Activated CD8-positive, alpha-beta T cell treated with anti-CD3 and anti-CD28 coated beads, Interleukin-2, amount 10 ng/mL, durations not matched to agents 7 days and 5 days (primary cell): ENCODE measurements at regions of chr2 and their contacts with region 1.

Region 1: DNA sequence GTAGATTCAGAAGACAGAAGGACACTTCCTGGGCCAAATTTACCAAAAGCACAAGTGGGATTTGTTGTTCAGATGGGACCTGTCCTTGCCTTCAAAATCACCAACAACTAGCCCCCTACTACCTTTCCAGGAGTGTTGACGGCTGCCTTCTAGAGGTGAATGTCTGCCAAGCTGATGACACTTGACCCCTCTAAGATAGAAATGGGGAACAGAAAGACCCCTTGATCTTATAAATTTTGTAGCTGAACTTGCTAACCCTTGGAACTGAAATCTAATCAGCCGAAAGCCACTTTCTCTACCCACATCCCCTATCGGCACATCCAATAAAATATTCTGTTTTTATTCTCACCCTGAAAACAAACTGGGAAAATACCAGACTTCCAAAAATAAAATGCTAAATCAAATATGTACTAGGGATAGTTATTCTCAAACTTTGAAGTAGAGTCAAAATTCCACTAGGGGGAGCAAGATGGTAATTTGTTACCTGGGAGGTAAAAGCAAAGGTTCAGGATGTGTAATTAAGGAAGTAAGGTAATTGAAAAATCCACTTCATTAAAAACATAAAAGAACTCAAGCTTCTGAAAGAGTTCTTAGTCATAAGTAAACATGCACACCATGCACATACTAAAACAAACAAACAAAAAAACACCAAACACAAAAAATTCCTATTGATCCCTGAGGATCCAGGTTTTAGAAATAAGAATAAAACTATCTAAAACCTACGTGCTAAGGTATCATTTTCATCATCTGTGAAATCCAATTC is 119.2 kb downstream of the ANKRD44 start:
- DNase-seq: no peak
- ATAC-seq: peak; percentile 43
- H3K4me3 Mint-ChIP-seq: peak overlapping the region; percentile 27
- H3K27ac Mint-ChIP-seq: peak overlapping the region; percentile 44
- H3K4me1 Mint-ChIP-seq: peaks cover 78% of the 10 kb centered on the region
- H3K27me3 Mint-ChIP-seq: no peaks in the 10 kb centered on the region

Region 2: DNA sequence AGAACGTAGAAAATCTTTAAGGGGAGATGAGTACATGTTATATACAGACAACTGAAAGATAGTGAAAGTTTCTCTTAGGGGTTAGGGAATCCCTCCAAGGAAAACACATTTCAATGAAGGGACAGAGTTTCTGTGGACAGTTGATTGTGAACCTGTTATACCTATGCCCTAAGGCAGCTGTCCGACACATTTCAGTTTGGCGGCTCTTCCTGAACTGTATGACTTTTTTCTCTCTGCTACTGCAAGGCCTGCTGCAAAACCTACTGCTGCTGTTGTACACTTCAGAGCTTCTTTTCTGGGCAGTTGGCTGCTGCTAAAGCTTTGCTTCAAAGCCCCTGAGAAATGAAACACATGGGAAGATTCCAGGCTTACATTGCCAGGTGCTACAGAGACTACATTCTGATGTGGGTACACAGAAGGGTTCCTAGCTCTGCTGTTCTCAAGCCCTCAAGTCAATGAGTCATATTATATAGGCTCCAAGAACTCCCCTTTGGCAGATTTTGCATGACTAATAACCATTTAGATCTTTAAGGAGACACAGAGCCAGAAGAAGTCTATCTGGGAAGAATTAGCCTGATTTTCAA is 252.1 kb before region 1 on chr2:
- CTCF ChIA-PET with region 1: no interaction called
- POLR2A ChIA-PET with region 1: no interaction called
- DNase-seq: no peak
- ATAC-seq: no peak
- H3K4me3 Mint-ChIP-seq: no peak overlapping the region
- H3K27ac Mint-ChIP-seq: no peak overlapping the region
- H3K4me1 Mint-ChIP-seq: no peaks in the 10 kb centered on the region
- H3K27me3 Mint-ChIP-seq: no peaks in the 10 kb centered on the region

Region 3: GRCh38 chr2:197092431-197092830 is 98.9 kb before region 1 on chr2:
- CTCF ChIA-PET with region 1: no interaction called
- POLR2A ChIA-PET with region 1: no interaction called
- DNase-seq: no peak
- ATAC-seq: no peak
- H3K4me3 Mint-ChIP-seq: no peak overlapping the region
- H3K27ac Mint-ChIP-seq: no peak overlapping the region
- H3K4me1 Mint-ChIP-seq: no peaks in the 10 kb centered on the region
- H3K27me3 Mint-ChIP-seq: no peaks in the 10 kb centered on the region

Region 4: GRCh38 chr2:197179744-197180498 is 11.4 kb before region 1 on chr2:
- CTCF ChIA-PET with region 1: interaction called, 26 read pairs
- POLR2A ChIA-PET with region 1: interaction called, 5 read pairs
- DNase-seq: no peak
- ATAC-seq: no peak
- H3K4me3 Mint-ChIP-seq: no peak overlapping the region
- H3K27ac Mint-ChIP-seq: no peak overlapping the region
- H3K4me1 Mint-ChIP-seq: peaks cover 36% of the 10 kb centered on the region
- H3K27me3 Mint-ChIP-seq: no peaks in the 10 kb centered on the region

Region 5: DNA sequence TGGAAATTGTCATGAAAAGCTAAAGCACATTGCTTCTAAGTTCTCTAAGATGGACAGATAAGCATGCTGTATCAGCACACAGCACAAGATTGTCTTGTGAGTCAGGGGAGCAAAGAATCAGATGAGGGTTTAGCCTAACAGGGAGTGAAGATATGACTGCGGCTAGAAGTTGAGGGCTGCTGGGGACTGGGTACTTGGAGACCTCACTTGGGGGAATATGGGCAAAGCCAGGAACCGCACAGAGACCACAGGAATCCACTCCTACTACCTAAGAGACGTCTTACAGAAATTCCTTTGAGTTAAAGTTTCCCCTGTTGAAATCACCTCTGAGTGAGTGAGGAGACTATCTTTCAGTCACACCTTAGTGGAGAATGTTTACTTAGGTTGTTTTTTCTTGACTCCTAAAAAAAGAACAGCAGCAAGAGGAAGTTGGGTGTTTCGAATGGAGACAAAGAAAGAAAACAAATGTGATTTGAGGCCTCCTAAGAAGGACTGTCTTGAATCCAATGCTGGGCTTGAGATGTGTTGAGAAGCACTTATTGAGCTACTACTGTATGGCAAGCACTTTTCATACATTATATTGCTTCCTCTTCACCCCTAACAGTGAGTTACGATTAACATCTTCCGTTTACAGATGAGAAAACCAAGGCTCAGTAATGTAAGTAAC is 18.5 kb after region 1 on chr2:
- CTCF ChIA-PET with region 1: interaction called, 79 read pairs
- POLR2A ChIA-PET with region 1: interaction called, 4 read pairs
- DNase-seq: peak; percentile 56
- ATAC-seq: peak; percentile 56
- H3K4me3 Mint-ChIP-seq: peak overlapping the region; percentile 48
- H3K27ac Mint-ChIP-seq: peak overlapping the region; percentile 87
- H3K4me1 Mint-ChIP-seq: peaks cover 98% of the 10 kb centered on the region
- H3K27me3 Mint-ChIP-seq: no peaks in the 10 kb centered on the region

Region 6: DNA sequence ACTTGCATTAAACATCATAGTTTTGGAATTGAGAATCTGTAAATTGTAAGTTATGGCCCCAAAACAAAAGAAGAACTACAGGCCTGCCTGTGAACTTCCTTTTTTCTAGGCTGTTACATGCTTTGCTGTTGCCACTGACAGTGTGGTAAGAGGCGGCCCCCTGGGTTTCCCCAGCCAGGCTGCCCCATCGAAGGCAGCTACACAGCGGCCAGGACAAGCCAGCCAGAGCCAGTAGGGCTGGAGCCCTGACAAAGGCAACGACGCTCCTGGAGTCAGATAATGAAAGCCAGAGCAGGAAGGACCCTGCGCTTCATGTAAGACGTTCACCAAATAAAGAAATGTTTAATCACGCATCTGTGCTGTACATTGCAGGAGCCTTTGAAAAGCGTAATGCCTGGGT is 64.2 kb after region 1 on chr2:
- CTCF ChIA-PET with region 1: interaction called, 18 read pairs
- POLR2A ChIA-PET with region 1: no interaction called
- DNase-seq: peak; percentile 84
- ATAC-seq: peak; percentile 94
- H3K4me3 Mint-ChIP-seq: peak overlapping the region; percentile 77
- H3K27ac Mint-ChIP-seq: peak overlapping the region; percentile 92
- H3K4me1 Mint-ChIP-seq: peaks cover 78% of the 10 kb centered on the region
- H3K27me3 Mint-ChIP-seq: no peaks in the 10 kb centered on the region

Region 7: DNA sequence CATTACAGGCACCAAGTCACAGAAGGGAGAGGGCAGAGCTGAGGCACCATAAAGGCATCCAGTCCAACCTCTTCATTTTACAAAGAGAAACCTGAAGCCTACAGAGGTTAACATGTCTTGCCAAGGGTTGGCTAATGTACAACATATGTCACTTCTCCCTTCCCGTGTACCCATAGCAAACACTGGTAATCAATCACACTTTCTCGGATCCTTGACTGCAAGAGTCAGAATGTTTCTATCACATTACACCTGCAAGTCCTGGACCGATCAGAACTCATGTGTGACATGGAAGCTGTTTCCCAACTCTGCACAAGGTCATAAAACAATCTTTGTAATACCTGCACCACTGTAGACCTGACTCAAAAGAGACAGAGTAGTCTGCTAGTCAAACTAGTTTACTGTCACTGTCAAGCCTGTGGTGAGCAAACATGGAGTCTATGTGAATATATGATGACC is 113.2 kb after region 1 on chr2:
- CTCF ChIA-PET with region 1: interaction called, 69 read pairs
- POLR2A ChIA-PET with region 1: interaction called, 40 read pairs
- DNase-seq: no peak
- ATAC-seq: peak; percentile 12
- H3K4me3 Mint-ChIP-seq: peak overlapping the region; percentile 95
- H3K27ac Mint-ChIP-seq: peak overlapping the region; percentile 84
- H3K4me1 Mint-ChIP-seq: peaks cover 81% of the 10 kb centered on the region
- H3K27me3 Mint-ChIP-seq: no peaks in the 10 kb centered on the region

Region 8: DNA sequence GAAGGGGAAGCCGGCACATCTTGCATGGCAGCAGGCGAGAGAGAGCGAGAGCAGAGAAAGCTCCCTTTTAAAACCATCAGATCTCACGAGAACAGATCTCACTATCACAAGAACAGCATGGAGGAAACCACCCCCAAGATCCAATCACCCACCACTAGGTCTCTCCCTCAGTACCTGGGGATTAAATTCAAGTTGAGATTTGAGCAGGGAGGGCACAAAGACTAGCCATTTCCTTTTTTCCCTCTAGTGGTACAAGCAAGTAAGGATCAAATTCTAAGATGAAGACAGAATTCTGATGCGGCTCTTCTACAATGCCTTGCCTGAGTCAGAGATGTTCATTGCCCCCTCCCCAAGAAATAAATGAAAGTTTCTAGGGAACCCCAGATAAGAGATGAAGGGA is 164.8 kb after region 1 on chr2:
- CTCF ChIA-PET with region 1: interaction called, 17 read pairs
- POLR2A ChIA-PET with region 1: no interaction called
- DNase-seq: no peak
- ATAC-seq: peak; percentile 45
- H3K4me3 Mint-ChIP-seq: no peak overlapping the region
- H3K27ac Mint-ChIP-seq: no peak overlapping the region
- H3K4me1 Mint-ChIP-seq: peaks cover 18% of the 10 kb centered on the region
- H3K27me3 Mint-ChIP-seq: no peaks in the 10 kb centered on the region

Region 9: DNA sequence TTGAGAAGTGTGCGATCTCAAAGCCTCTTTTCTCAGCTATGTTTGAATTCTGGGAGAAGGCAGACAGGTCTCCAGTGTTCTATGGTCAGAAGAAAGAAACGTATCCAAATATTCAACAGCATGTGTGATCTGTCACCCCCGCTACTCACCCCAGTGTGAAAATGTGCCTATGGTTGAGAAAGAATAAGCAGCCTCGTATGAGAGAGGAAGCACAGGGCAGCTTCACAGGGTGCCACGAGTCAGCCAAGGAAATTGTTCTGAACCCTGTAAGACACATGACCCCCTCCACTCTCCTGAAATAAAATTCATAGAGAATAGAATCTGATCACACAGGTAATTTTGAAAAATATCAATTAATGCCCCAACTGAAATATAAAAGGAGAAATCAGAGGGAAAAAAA is 251.5 kb after region 1 on chr2:
- CTCF ChIA-PET with region 1: no interaction called
- POLR2A ChIA-PET with region 1: no interaction called
- DNase-seq: no peak
- ATAC-seq: no peak
- H3K4me3 Mint-ChIP-seq: no peak overlapping the region
- H3K27ac Mint-ChIP-seq: no peak overlapping the region
- H3K4me1 Mint-ChIP-seq: no peaks in the 10 kb centered on the region
- H3K27me3 Mint-ChIP-seq: no peaks in the 10 kb centered on the region